Breast epithelium (tissue), 4 donors: ENCODE measurements at regions of chr1 and their contacts with region 1.

Region 1: GRCh38 chr1:198811449-198811848 is 172.6 kb downstream of the PTPRC start:
- DNase-seq: no peak
- H3K4me3 ChIP-seq: no peak overlapping the region
- H3K27ac ChIP-seq: no peak overlapping the region
- H3K4me1 ChIP-seq: no peaks in the 10 kb centered on the region
- H3K27me3 ChIP-seq: no peaks in the 10 kb centered on the region
- CTCF ChIP-seq: no peak
- POLR2A ChIP-seq: no peak

Region 2: GRCh38 chr1:197862671-197863070 is 948.8 kb before region 1 on chr1:
- intact Hi-C with region 1: no loop called
- DNase-seq: no peak
- H3K4me3 ChIP-seq: no peak overlapping the region
- H3K27ac ChIP-seq: no peak overlapping the region
- H3K4me1 ChIP-seq: no peaks in the 10 kb centered on the region
- H3K27me3 ChIP-seq: no peaks in the 10 kb centered on the region
- CTCF ChIP-seq: no peak
- POLR2A ChIP-seq: no peak

Region 3: DNA sequence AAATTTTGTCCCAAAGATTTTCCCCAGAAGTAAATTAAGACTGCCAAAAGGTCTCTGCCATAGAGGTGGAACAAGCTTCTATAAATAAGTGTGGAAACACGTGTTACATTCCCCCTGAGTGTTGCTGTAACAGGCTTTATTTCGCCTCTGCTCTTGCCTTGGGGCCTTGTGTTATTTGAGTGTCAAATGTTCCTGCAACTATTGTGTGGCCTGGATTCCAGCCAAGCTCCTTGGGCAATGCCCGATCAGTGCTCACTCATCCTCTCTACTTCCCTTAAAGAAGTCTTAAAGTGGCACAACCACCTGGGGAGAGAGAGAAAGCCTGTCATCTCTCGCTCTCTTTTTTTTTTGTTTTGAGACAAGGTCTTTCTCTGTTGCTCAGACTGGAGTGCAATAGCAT is 1372.7 kb after region 1 on chr1:
- intact Hi-C with region 1: loop called (anchors 5 kb)
- DNase-seq: peak in 1 of 2 donors; percentile 69
- H3K4me3 ChIP-seq: no peak overlapping the region
- H3K27ac ChIP-seq: no peak overlapping the region
- H3K4me1 ChIP-seq: no peaks in the 10 kb centered on the region
- H3K27me3 ChIP-seq: no peaks in the 10 kb centered on the region
- CTCF ChIP-seq: no peak
- POLR2A ChIP-seq: no peak